ENCODE measurements at regions of chr1 and their contacts with region 1.

Region 1: DNA sequence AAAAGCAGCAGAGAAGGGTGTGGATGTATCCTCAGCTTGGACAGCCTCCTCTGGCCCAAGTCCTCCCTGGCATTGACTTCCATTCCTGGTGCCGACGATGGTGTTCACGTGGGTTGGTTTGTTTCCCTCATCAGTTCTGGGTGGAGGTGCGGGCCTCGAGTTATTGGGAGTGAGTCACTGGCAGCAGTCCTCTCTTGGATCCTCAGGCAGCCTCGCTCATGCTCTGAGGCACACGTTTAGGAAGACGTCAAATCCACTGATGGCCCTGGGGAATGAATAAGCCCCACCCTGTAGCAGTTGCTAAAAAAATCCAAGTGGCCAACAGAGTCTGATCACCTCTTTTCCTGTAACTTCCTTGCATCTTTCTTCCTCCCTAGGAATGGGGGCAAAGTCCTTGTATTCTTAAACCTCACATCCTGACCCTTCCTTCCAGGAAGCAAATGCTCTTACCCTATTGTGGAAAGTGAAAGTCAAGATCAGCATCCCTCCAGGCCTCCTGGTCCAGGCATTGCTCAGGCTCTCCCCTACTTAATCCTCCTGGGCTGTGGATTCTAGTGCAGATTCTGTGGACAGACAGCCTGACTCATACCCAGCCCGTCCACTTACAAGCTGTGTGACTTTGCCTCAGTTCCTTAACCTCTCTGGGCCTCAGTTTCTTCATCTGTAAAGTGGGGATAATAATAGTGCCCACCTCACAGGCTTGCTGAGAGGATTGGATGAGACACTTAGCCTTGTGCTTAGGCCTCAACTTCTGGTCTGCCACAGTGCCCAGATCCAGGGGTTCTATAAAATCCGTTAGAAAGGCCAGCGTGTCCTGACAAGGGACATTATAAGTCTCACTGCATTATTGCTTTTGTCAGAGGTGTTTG is 111.1 kb downstream of the TLR5 start:
- DNase-seq: peak; percentile 34 to 62
- ATAC-seq: peak; percentile 50 to 97 (median 92)
- H3K4me3 ChIP-seq: no peak overlapping the region
- H3K27ac ChIP-seq: peak overlapping the region in 9 of 10 donors; percentile 13 to 74 (median 53)
- H3K4me1 ChIP-seq: peaks cover 0 to 29% (median 13%) of the 10 kb centered on the region in 9 donors
- H3K27me3 ChIP-seq: no peaks in the 10 kb centered on the region
- CTCF ChIP-seq: no peak

Region 2: GRCh38 chr1:223068900-223069665 is 37.1 kb after region 1 on chr1:
- intact Hi-C with region 1: loop called in 1 of 10 experiments (anchors 5 kb)
- DNase-seq: no peak
- ATAC-seq: no peak
- H3K4me3 ChIP-seq: no peak overlapping the region
- H3K27ac ChIP-seq: no peak overlapping the region
- H3K4me1 ChIP-seq: peaks cover 0 to 22% (median 0%) of the 10 kb centered on the region in 9 donors
- H3K27me3 ChIP-seq: no peaks in the 10 kb centered on the region
- CTCF ChIP-seq: no peak

Region 3: DNA sequence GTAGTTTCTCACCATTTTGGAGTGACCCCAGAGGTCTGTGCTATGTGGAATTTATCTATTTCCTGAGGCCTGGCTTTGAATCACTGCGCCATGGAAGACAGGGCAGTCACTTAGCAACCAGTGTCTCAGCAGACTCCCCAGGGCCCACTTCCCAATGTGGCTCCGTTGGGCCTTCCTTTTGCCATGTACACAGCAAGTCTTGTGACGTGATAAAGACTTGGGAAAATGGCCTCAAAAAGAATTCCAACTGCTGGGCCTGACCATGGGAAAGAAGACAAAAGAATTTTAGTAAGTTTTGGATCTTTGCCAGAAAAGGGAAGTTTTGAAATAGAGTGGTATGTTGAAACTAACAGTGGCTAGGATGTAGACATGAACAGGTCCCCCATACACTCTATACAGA is 74.9 kb after region 1 on chr1:
- intact Hi-C with region 1: no loop called
- DNase-seq: peak in 1 of 2 donors; percentile 19
- ATAC-seq: peak in 5 of 8 donors; percentile 26 to 56 (median 36)
- H3K4me3 ChIP-seq: no peak overlapping the region
- H3K27ac ChIP-seq: peak overlapping the region in 4 of 10 donors; percentile 3 to 45 (median 21)
- H3K4me1 ChIP-seq: peaks cover 0 to 33% (median 4%) of the 10 kb centered on the region in 9 donors
- H3K27me3 ChIP-seq: no peaks in the 10 kb centered on the region
- CTCF ChIP-seq: no peak

Measured in heart right ventricle (tissue), 16 donors.